Right cardiac atrium (tissue), 5 donors: ENCODE measurements at regions of chr10 and their contacts with region 1.

Region 1: GRCh38 chr10:88791924-88792323 is 10.6 kb upstream of the LIPM start:
- DNase-seq: peak in 1 of 3 donors; percentile 52
- ATAC-seq: peak in 1 of 2 donors; percentile 62
- H3K4me3 ChIP-seq: no peak overlapping the region
- H3K27ac ChIP-seq: no peak overlapping the region
- H3K4me1 ChIP-seq: no peaks in the 10 kb centered on the region
- H3K27me3 ChIP-seq: no peaks in the 10 kb centered on the region

Region 2: GRCh38 chr10:88670497-88670896 is 121.4 kb before region 1 on chr10:
- intact Hi-C with region 1: no loop called
- DNase-seq: no peak
- ATAC-seq: no peak
- H3K4me3 ChIP-seq: no peak overlapping the region
- H3K27ac ChIP-seq: no peak overlapping the region
- H3K4me1 ChIP-seq: no peaks in the 10 kb centered on the region
- H3K27me3 ChIP-seq: no peaks in the 10 kb centered on the region

Region 3: DNA sequence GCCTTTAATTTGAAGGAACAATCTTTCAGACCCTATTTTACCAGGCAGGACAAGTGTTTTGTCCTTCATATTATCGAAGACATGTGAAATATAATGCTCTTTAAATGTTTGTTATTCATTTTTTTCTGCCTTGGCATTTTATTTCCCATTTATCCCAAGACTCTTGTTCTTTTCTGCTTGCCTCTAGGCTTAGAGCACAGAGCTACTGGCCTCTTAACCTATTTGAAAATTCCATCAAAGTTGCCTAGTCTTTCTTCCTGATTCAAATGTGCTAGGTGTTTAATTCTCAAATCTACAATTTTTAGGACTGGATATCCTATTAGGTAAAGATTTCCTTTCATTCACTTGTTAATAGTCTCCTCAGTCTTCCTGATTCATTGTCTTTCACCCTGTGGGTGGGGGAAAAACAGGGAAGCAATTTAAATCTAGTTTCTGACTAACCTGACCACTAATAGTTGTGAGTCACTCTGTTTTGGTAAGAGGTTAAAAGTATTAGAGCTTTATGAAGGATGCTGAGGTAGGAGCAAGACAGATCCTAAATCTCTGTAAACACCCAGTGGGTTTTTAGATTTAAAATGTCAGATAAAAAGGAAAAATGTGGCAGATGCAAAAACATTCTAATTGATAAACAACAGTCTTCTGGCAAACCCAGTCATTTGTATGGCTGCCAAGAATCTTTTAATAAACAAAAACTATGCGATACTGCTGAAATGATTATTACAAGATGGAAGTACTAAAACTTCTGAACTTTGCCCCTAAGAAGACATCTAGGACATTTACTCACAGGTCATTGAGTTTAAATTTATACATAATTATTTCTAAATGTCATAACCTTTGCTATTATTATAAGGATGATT is 84.3 kb before region 1 on chr10:
- intact Hi-C with region 1: loop called in 1 of 4 experiments (anchors 10 kb)
- DNase-seq: no peak
- ATAC-seq: no peak
- H3K4me3 ChIP-seq: no peak overlapping the region
- H3K27ac ChIP-seq: no peak overlapping the region
- H3K4me1 ChIP-seq: no peaks in the 10 kb centered on the region
- H3K27me3 ChIP-seq: no peaks in the 10 kb centered on the region